ENCODE measurements at regions of chr19 and their contacts with region 1.

Region 1: GRCh38 chr19:48795055-48795684 is 15.7 kb downstream of the BCAT2 start:
- DNase-seq: peak; percentile 82 to 92
- H3K4me3 ChIP-seq: peak overlapping the region; percentile 39 to 84 (median 70)
- H3K27ac ChIP-seq: peak overlapping the region; percentile 65; the same call in 1 of the 2 replicates
- H3K4me1 ChIP-seq: peaks cover 0 to 16% (median 10%) of the 10 kb centered on the region in 4 experiments; a peak in 6 of 7 replicates
- H3K27me3 ChIP-seq: no peaks in the 10 kb centered on the region
- CTCF ChIP-seq: peak; percentile 84 to 90 (median 87)
- EP300 ChIP-seq: no peak
- POLR2A ChIP-seq: no peak
- RAD21 ChIP-seq: peak; percentile 75 to 79

Region 2: GRCh38 chr19:48705431-48705830 is 89.7 kb before region 1 on chr19:
- CTCF ChIA-PET with region 1: no interaction called
- POLR2A ChIA-PET with region 1: no interaction called
- DNase-seq: no peak
- H3K4me3 ChIP-seq: no peak overlapping the region
- H3K27ac ChIP-seq: no peak overlapping the region
- H3K4me1 ChIP-seq: peaks cover 0 to 3% (median 0%) of the 10 kb centered on the region in 4 experiments; a peak in 1 of 7 replicates
- H3K27me3 ChIP-seq: no peaks in the 10 kb centered on the region
- CTCF ChIP-seq: no peak
- EP300 ChIP-seq: no peak
- POLR2A ChIP-seq: no peak
- RAD21 ChIP-seq: no peak

Region 3: GRCh38 chr19:48724796-48725753 is 70.1 kb before region 1 on chr19:
- CTCF ChIA-PET with region 1: no interaction called
- POLR2A ChIA-PET with region 1: no interaction called
- DNase-seq: no peak
- H3K4me3 ChIP-seq: no peak overlapping the region
- H3K27ac ChIP-seq: no peak overlapping the region
- H3K4me1 ChIP-seq: peaks cover 0 to 11% (median under 1%) of the 10 kb centered on the region in 4 experiments; a peak in 4 of 7 replicates
- H3K27me3 ChIP-seq: no peaks in the 10 kb centered on the region
- CTCF ChIP-seq: no peak
- EP300 ChIP-seq: no peak
- POLR2A ChIP-seq: no peak
- RAD21 ChIP-seq: no peak

Region 4: DNA sequence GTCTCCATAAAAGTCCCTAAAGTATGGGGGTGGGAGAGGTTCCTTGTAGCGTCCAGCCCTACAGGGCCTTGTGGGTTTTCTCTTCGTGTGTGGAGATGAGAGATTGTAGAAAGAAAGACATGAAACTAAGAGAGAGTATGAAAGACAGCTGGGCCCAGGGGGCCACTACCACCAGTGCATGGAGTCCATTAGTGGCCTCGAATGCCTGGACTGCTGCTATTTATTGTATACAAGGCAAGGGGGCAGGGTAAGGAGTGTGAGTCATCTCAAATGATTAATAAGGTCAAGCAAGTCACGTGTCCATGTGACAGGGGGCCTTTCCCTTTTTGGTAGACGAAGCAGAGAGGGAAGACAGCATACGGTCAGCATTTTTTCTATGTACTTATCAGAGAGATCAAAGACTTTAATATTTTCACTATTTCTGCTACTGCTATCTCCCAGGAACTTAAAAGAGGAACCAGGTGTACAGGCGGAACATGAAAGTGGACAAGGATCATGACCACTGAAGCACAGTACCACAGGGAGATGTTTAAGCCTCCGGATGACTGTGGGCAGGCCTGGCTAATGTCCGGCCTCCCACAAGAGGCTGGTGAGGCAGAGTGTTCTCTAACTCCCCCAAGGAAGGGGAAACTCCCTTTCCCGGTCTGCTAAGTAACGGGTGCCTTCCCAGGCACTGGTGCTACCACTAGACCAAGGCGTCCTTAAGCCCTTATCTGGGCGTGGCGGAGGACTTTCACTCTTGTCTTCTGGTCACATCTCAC is 14.4 kb before region 1 on chr19:
- CTCF ChIA-PET with region 1: interaction called, 16 read pairs
- POLR2A ChIA-PET with region 1: no interaction called
- DNase-seq: no peak
- H3K4me3 ChIP-seq: no peak overlapping the region
- H3K27ac ChIP-seq: no peak overlapping the region
- H3K4me1 ChIP-seq: no peaks in the 10 kb centered on the region
- H3K27me3 ChIP-seq: peaks cover 0 to 3% (median 0%) of the 10 kb centered on the region in 4 experiments; a peak in 3 of 7 replicates
- CTCF ChIP-seq: no peak
- EP300 ChIP-seq: no peak
- POLR2A ChIP-seq: no peak
- RAD21 ChIP-seq: no peak

Region 5: GRCh38 chr19:48812094-48812929 is 17.1 kb after region 1 on chr19:
- CTCF ChIA-PET with region 1: interaction called, 285 read pairs
- POLR2A ChIA-PET with region 1: interaction called, 36 read pairs
- DNase-seq: peak in 1 of 2 experiments; percentile 89
- H3K4me3 ChIP-seq: peak overlapping the region in 3 of 4 experiments; percentile 3 to 52 (median 26); a peak in 5 of 8 replicates
- H3K27ac ChIP-seq: peak overlapping the region; percentile 71; the same call in 1 of the 2 replicates
- H3K4me1 ChIP-seq: peaks cover 3 to 15% (median 10%) of the 10 kb centered on the region in 4 experiments
- H3K27me3 ChIP-seq: peaks cover 0 to 11% (median 0%) of the 10 kb centered on the region in 4 experiments; a peak in 3 of 7 replicates
- CTCF ChIP-seq: peak in 2 of 3 experiments; percentile 13 to 20; a peak in 2 of 4 replicates
- EP300 ChIP-seq: peak in 1 of 2 experiments; percentile 94; a peak in 1 of 3 replicates
- POLR2A ChIP-seq: 0 out of 3 replicates have a peak, but pooled peaks of 1 of the 2 experiments have one; percentile 28
- RAD21 ChIP-seq: no peak; a peak in 1 of 4 replicates

Region 6: DNA sequence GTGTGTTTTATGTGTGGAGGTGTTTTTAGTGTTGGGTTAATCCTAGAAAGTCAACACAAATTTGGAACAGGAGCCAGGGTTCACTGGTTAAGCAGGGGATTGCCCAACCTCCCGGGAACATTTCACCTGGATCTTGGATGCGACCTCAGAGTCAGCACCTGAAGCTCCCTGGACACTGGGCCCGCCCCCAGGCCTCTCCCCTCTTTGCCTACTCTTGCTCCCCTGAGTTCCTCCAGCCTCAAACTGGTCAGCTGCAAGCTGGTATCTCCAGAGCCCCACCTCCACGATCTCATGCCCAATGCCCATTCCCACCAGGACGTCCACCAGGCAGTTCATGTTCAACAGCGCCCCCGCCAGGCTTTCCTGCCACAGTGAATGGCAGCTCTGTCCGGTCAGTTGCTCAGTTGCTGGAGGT is 31.4 kb after region 1 on chr19:
- CTCF ChIA-PET with region 1: interaction called, 56 read pairs
- POLR2A ChIA-PET with region 1: interaction called, 3 read pairs
- DNase-seq: peak in 1 of 2 experiments; percentile 85
- H3K4me3 ChIP-seq: no peak overlapping the region
- H3K27ac ChIP-seq: no peak overlapping the region
- H3K4me1 ChIP-seq: no peaks in the 10 kb centered on the region
- H3K27me3 ChIP-seq: no peaks in the 10 kb centered on the region
- CTCF ChIP-seq: peak; percentile 74 to 83 (median 83)
- EP300 ChIP-seq: no peak
- POLR2A ChIP-seq: no peak
- RAD21 ChIP-seq: peak; percentile 63 to 68

Region 7: GRCh38 chr19:48905664-48906063 is 110.5 kb after region 1 on chr19:
- CTCF ChIA-PET with region 1: no interaction called
- POLR2A ChIA-PET with region 1: no interaction called
- DNase-seq: no peak
- H3K4me3 ChIP-seq: no peak overlapping the region
- H3K27ac ChIP-seq: no peak overlapping the region
- H3K4me1 ChIP-seq: no peaks in the 10 kb centered on the region; a peak in 3 of 7 replicates
- H3K27me3 ChIP-seq: no peaks in the 10 kb centered on the region
- CTCF ChIP-seq: no peak
- EP300 ChIP-seq: no peak
- POLR2A ChIP-seq: no peak
- RAD21 ChIP-seq: no peak

Region 8: GRCh38 chr19:48970923-48971395 is 175.8 kb after region 1 on chr19:
- CTCF ChIA-PET with region 1: interaction called, 14 read pairs
- POLR2A ChIA-PET with region 1: interaction called, 7 read pairs
- DNase-seq: peak in 1 of 2 experiments; percentile 96
- H3K4me3 ChIP-seq: no peak overlapping the region
- H3K27ac ChIP-seq: no peak overlapping the region
- H3K4me1 ChIP-seq: peaks cover 0 to 3% (median 1%) of the 10 kb centered on the region in 4 experiments; a peak in 4 of 7 replicates
- H3K27me3 ChIP-seq: no peaks in the 10 kb centered on the region
- CTCF ChIP-seq: peak; percentile 94 to 98 (median 95)
- EP300 ChIP-seq: no peak
- POLR2A ChIP-seq: no peak
- RAD21 ChIP-seq: peak; percentile 87 to 93